Right cardiac atrium (tissue), 5 donors: ENCODE measurements at regions of chr4 and their contacts with region 1.

Region 1: GRCh38 chr4:1628892-1629698 is 55.0 kb downstream of the FAM53A start:
- DNase-seq: peak; percentile 59 to 87 (median 87)
- ATAC-seq: peak; percentile 66 to 81
- H3K4me3 ChIP-seq: no peak overlapping the region
- H3K27ac ChIP-seq: no peak overlapping the region
- H3K4me1 ChIP-seq: no peaks in the 10 kb centered on the region
- H3K27me3 ChIP-seq: no peaks in the 10 kb centered on the region

Region 2: DNA sequence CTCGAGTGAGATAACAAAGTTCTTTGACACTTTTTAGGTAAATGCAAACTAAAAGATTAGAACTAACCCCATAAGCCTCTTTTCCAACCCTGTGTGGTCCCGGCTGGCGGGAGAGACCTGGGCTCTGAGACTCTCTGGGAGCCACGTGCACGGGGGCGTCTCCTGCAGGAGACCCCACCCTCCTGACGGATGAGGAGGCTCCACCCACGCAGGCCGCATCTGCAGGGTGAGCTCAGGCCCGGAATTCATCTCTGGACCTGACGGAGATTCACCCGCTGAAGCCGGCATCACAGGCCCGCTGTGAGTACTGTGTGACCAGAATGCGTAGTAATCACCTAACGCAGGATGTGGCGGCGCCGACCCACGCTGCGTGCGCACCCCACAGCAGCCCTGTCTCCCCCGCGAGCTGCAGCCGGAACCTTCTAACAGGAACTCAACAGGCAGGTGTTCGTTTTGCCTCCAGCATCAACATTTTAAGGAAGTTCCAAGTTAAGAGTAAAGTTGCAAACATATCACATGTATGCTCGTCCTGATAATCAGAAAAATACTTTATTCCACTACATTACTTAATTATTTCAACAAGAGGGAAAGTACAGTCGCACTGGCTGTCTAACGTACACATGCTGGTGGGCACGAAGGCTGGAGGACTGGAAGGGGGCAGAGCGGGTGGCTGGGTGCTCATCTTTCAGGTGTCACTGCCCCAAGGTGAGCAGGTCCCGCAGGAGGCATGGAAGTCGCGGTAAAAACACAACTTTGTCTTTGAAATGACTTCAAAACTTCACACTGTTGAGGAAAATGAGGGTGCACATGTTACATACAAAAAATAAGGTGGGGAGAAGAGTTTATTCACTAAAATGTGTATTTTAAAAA is 573.1 kb before region 1 on chr4:
- intact Hi-C with region 1: no loop called
- DNase-seq: peak in 2 of 3 donors; percentile 68 to 74
- ATAC-seq: peak; percentile 42 to 52
- H3K4me3 ChIP-seq: peak overlapping the region; percentile 27
- H3K27ac ChIP-seq: no peak overlapping the region
- H3K4me1 ChIP-seq: no peaks in the 10 kb centered on the region
- H3K27me3 ChIP-seq: no peaks in the 10 kb centered on the region

Region 3: GRCh38 chr4:1365271-1366178 is 263.6 kb before region 1 on chr4:
- intact Hi-C with region 1: loop called in 1 of 4 experiments (anchors 5 kb)
- DNase-seq: peak in 2 of 3 donors; percentile 25 to 41
- ATAC-seq: no peak
- H3K4me3 ChIP-seq: no peak overlapping the region
- H3K27ac ChIP-seq: no peak overlapping the region
- H3K4me1 ChIP-seq: no peaks in the 10 kb centered on the region
- H3K27me3 ChIP-seq: no peaks in the 10 kb centered on the region